ENCODE measurements at regions of chr3 and their contacts with region 1.

Region 1: DNA sequence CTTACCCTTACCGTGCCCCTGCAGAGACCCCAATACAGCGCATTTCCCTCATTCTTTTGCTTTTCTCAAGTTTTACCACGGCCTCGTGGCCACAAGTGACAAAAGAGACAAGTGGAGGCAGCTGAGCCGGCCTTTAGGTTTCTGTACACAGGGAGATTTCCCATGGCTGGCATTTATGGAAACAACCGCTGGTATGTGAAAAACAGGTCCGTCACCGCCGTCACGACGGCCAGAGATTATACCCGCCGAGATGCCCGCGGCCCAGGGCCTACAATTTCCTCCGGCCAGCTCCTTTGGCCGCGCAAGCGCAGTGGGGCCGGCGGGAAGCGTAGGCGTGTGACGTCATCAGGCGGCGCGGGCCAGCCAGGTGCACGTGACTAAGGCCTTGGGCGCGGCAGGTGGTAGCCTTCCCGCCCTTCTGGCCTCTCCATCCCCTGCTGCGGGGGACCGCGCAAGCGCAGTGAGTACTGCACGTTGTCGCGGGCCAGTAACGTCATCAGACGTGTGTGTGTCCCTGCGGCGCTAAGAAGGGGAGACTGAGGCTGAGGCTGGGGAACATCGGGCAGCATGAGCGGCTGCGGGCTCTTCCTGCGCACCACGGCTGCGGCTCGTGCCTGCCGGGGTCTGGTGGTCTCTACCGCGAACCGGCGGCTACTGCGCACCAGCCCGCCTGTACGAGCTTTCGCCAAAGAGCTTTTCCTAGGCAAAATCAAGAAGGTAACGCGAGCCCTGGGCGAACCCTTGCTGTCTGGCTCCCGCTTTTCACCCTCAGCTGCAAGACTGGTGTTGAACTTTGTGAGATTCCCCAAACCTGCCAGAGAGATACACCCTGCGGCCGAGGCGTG is at the start of gene ACAD9:
- DNase-seq: peak; percentile 90 to 99 (median 96)
- ATAC-seq: peak; percentile 90
- H3K4me3 ChIP-seq: peak within 1 kb of the TSS; percentile 75 to 92
- H3K4me3 Mint-ChIP-seq: peak within 1 kb of the TSS; percentile 85
- H3K27ac ChIP-seq: peak within 1 kb of the TSS; percentile 93 to 100
- H3K27ac Mint-ChIP-seq: peak within 1 kb of the TSS; percentile 96
- H3K4me1 ChIP-seq: peaks cover 56% of the 10 kb centered on the region
- H3K4me1 Mint-ChIP-seq: peaks cover 74% of the 10 kb centered on the region
- H3K27me3 ChIP-seq: no peaks in the 10 kb centered on the region
- H3K27me3 Mint-ChIP-seq: no peaks in the 10 kb centered on the region
- CTCF ChIP-seq: no peak
- total RNA-seq, gene ACAD9: 43.1 to 47.1 TPM

Region 2: GRCh38 chr3:128650096-128651050 is 229.0 kb before region 1 on chr3 and contains the start of gene RPN1:
- CTCF ChIA-PET with region 1: no interaction called
- POLR2A ChIA-PET with region 1: no interaction called
- intact Hi-C with region 1: loop called (anchors 1 kb)
- DNase-seq: peak; percentile 90 to 97 (median 95)
- ATAC-seq: peak; percentile 96
- H3K4me3 ChIP-seq: peak within 1 kb of the TSS; percentile 97
- H3K4me3 Mint-ChIP-seq: peak within 1 kb of the TSS; percentile 82
- H3K27ac ChIP-seq: peak within 1 kb of the TSS; percentile 95 to 96
- H3K27ac Mint-ChIP-seq: peak within 1 kb of the TSS; percentile 88
- H3K4me1 ChIP-seq: peaks cover 24% of the 10 kb centered on the region
- H3K4me1 Mint-ChIP-seq: peaks cover 47% of the 10 kb centered on the region
- H3K27me3 ChIP-seq: no peaks in the 10 kb centered on the region
- H3K27me3 Mint-ChIP-seq: no peaks in the 10 kb centered on the region
- CTCF ChIP-seq: no peak
- total RNA-seq, gene RPN1: 65.7 to 76.5 TPM

Region 3: GRCh38 chr3:128787256-128788240 is 91.8 kb before region 1 on chr3:
- CTCF ChIA-PET with region 1: interaction called, 3 read pairs
- POLR2A ChIA-PET with region 1: no interaction called
- intact Hi-C with region 1: loop called in 1 of 2 experiments (anchors 1 kb)
- DNase-seq: peak in 5 of 9 experiments; percentile 34 to 70 (median 62)
- ATAC-seq: peak; percentile 60
- H3K4me3 ChIP-seq: peak overlapping the region in 1 of 2 experiments; percentile 36
- H3K4me3 Mint-ChIP-seq: peak overlapping the region; percentile 70
- H3K27ac ChIP-seq: peak overlapping the region; percentile 49 to 83
- H3K27ac Mint-ChIP-seq: peak overlapping the region; percentile 91
- H3K4me1 ChIP-seq: peaks cover 77% of the 10 kb centered on the region
- H3K4me1 Mint-ChIP-seq: peaks cover 88% of the 10 kb centered on the region
- H3K27me3 ChIP-seq: no peaks in the 10 kb centered on the region
- H3K27me3 Mint-ChIP-seq: no peaks in the 10 kb centered on the region
- CTCF ChIP-seq: peak; percentile 51

Region 4: GRCh38 chr3:128922804-128923459 is 43.6 kb after region 1 on chr3:
- CTCF ChIA-PET with region 1: interaction called, 61 read pairs
- POLR2A ChIA-PET with region 1: interaction called, 21 read pairs
- intact Hi-C with region 1: loop called (anchors 1 kb)
- DNase-seq: peak; percentile 16 to 83 (median 58)
- ATAC-seq: peak; percentile 85
- H3K4me3 ChIP-seq: peak overlapping the region; percentile 34 to 37
- H3K4me3 Mint-ChIP-seq: peak overlapping the region; percentile 84
- H3K27ac ChIP-seq: peak overlapping the region; percentile 34 to 52
- H3K27ac Mint-ChIP-seq: peak overlapping the region; percentile 90
- H3K4me1 ChIP-seq: peaks cover 19% of the 10 kb centered on the region
- H3K4me1 Mint-ChIP-seq: peaks cover 36% of the 10 kb centered on the region
- H3K27me3 ChIP-seq: no peaks in the 10 kb centered on the region
- H3K27me3 Mint-ChIP-seq: no peaks in the 10 kb centered on the region
- CTCF ChIP-seq: no peak

Region 5: DNA sequence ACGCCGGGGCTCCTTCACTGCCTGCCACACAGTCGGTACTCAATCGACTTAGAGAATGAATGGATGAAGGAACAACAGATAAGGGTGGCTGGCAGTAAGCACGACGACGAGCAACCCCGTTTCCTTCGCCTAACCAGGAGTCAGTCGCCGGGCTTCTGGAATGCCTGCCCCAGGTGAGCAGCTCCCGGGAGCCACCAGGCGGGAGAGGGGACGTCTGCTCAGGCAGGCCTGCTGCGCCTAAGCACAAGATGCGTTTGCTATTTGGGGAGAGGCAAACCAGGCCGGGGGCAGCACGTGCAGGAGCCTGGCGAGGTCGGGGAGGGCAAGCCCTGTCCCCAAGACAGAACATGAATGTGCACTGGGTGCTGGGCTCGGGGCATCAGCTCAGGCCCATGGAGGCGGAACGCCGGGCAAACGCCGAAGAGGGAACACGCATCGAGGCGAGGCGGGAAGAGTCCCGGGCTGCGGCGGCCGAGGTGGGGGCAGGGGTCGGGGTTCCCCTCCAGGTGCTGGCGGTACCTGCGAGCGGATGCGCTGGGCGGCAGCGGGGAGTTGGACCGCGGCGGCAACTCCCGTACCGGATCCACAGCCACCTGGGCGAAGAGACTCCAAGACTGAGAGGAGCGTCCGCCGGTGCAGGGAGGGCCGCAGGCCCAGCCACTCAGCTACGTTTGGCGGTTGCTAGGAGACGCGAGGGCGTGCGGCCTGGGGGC is 114.3 kb after region 1 on chr3 and contains the start of gene CFAP92:
- CTCF ChIA-PET with region 1: no interaction called
- POLR2A ChIA-PET with region 1: no interaction called
- intact Hi-C with region 1: no loop called
- DNase-seq: peak; percentile 84 to 94 (median 92)
- ATAC-seq: peak; percentile 97
- H3K4me3 ChIP-seq: peak within 1 kb of the TSS; percentile 39
- H3K4me3 Mint-ChIP-seq: peak within 1 kb of the TSS; percentile 81
- H3K27ac ChIP-seq: peak within 1 kb of the TSS in 1 of 2 experiments; percentile 22
- H3K27ac Mint-ChIP-seq: peak within 1 kb of the TSS; percentile 39
- H3K4me1 ChIP-seq: peaks cover 31% of the 10 kb centered on the region
- H3K4me1 Mint-ChIP-seq: peaks cover 30% of the 10 kb centered on the region
- H3K27me3 ChIP-seq: no peaks in the 10 kb centered on the region
- H3K27me3 Mint-ChIP-seq: no peaks in the 10 kb centered on the region
- CTCF ChIP-seq: no peak
- total RNA-seq, gene CFAP92: 0.60 to 0.75 TPM

Region 6: GRCh38 chr3:129183569-129184395 is 304.4 kb after region 1 on chr3 and contains the start of gene CNBP:
- CTCF ChIA-PET with region 1: no interaction called
- POLR2A ChIA-PET with region 1: no interaction called
- intact Hi-C with region 1: loop called in 1 of 2 experiments (anchors 5 kb)
- DNase-seq: peak; percentile 80 to 96 (median 92)
- ATAC-seq: peak; percentile 96
- H3K4me3 ChIP-seq: peak within 1 kb of the TSS; percentile 77 to 91
- H3K4me3 Mint-ChIP-seq: peak within 1 kb of the TSS; percentile 97
- H3K27ac ChIP-seq: peak within 1 kb of the TSS; percentile 93 to 99
- H3K27ac Mint-ChIP-seq: peak within 1 kb of the TSS; percentile 99
- H3K4me1 ChIP-seq: peaks cover 33% of the 10 kb centered on the region
- H3K4me1 Mint-ChIP-seq: peaks cover 40% of the 10 kb centered on the region
- H3K27me3 ChIP-seq: no peaks in the 10 kb centered on the region
- H3K27me3 Mint-ChIP-seq: no peaks in the 10 kb centered on the region
- CTCF ChIP-seq: no peak
- total RNA-seq, gene CNBP: 296 to 301 TPM

Region 7: DNA sequence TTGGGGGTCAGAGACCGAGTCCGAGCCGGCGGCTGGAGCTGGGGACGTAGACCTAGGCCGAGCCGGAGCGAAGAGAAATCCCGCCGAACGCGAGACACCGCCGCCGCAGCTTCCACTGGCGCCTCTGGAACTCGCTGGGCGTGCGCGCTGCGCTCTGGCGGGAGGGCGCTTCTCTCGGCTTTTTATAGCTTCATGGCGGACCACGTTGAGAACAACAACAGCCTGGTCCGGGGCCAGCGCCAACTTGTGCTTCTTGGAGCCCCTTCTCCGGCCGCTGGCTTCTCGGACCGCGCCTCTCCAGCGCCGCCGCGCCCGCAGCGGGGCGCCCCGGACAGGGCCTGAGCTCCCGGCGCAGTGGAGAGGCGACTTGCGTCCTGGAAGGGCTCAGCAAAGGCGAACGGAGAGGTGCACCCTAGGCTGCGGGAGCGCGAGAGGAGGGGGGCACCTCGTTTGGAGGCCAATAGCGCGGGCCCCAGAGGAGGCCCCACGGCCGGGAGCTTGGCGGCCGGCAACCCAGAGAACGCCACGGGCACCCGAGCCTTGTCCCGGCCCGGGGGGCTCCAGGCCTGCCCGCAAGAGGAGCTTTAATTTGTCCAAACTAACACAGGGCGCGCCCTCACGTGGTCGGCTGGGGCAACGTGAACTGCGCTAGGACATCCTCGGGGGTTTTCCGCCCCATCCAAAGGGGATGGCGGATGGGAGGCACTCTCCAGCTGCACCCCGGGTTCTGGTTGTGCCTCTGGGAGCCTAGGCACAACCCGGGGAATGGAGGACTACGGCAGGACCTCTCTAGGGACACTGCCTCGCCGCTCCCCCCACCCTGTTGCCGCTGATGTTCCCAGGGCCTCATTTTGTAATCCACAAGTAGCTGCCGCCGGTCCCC is 437.0 kb after region 1 on chr3:
- CTCF ChIA-PET with region 1: no interaction called
- POLR2A ChIA-PET with region 1: interaction called, 4 read pairs
- intact Hi-C with region 1: loop called (anchors 2 to 10 kb)
- DNase-seq: peak; percentile 79 to 96 (median 89)
- ATAC-seq: peak; percentile 45
- H3K4me3 ChIP-seq: peak overlapping the region; percentile 94 to 98
- H3K4me3 Mint-ChIP-seq: peak overlapping the region; percentile 95
- H3K27ac ChIP-seq: peak overlapping the region; percentile 55 to 84
- H3K27ac Mint-ChIP-seq: peak overlapping the region; percentile 88
- H3K4me1 ChIP-seq: peaks cover 16% of the 10 kb centered on the region
- H3K4me1 Mint-ChIP-seq: peaks cover 25% of the 10 kb centered on the region
- H3K27me3 ChIP-seq: no peaks in the 10 kb centered on the region
- H3K27me3 Mint-ChIP-seq: no peaks in the 10 kb centered on the region
- CTCF ChIP-seq: peak; percentile 68